ENCODE measurements at regions of chr9 and their contacts with region 1.

Region 1: GRCh38 chr9:127869310-127870152 is 7.9 kb downstream of the AK1 start:
- DNase-seq: no peak
- H3K4me3 ChIP-seq: no peak overlapping the region
- CTCF ChIP-seq: peak; percentile 96

Region 2: DNA sequence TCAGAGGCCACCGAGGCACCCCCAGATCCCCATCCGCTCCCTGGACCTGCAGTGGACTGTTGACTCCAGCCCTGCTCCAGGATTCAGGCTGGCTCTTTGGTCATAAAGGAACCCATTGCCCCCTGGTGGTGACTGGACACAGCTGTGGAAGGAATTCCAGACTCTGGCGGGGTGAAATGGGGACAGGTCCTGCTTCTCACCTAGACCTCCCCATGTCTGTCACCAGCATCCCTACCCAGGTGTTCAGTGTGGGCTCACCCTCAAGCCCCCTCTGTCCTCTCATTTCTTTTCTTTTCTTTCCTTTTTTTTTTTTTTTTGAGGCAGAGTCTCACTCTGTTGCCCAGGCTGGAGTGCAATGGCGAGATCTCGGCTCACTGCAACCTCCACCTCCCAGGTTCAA is 283.0 kb before region 1 on chr9:
- CTCF ChIA-PET with region 1: interaction called, 32 read pairs
- POLR2A ChIA-PET with region 1: no interaction called
- DNase-seq: no peak
- H3K4me3 ChIP-seq: no peak overlapping the region
- CTCF ChIP-seq: peak; percentile 92

Region 3: GRCh38 chr9:127785023-127785932 is 84.3 kb before region 1 on chr9:
- CTCF ChIA-PET with region 1: interaction called, 76 read pairs
- POLR2A ChIA-PET with region 1: no interaction called
- DNase-seq: no peak
- H3K4me3 ChIP-seq: peak overlapping the region; percentile 88
- CTCF ChIP-seq: peak; percentile 87

Region 4: GRCh38 chr9:127838375-127839078 is 31.0 kb before region 1 on chr9:
- CTCF ChIA-PET with region 1: interaction called, 10 read pairs
- POLR2A ChIA-PET with region 1: interaction called, 3 read pairs
- DNase-seq: peak; percentile 40
- H3K4me3 ChIP-seq: peak overlapping the region; percentile 21
- CTCF ChIP-seq: no peak

Region 5: DNA sequence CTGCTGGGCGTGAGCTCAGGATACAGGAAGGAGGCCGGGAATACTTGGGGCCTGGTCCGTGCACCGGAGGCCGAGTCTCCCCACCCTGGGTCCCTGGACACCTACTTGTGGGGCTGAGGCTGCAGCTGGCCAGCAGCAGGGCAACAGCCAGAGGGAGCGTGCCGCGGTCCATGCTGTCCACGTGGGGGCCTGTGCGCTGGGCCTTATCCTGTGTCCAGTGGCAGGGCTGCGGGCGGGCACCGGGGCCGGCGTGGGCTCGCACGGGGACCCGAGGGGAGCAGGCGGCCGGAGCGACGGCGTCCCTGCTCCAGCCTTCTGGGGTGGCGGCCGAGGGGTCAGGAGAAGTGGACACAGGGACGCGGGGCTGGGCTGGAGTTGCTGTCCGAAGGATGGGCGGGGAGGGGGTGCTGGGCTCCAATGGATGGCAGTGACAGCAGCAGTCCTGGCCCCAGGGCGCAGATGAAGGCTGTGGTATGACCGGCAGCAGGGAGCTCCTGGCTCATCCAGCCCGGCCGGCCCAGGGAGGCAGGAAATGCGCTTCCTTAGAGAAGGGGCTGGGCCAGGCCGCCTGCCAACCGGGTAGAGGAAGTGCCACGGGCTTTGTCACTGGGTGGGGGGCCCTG is 15.2 kb before region 1 on chr9 and contains the start of gene ENG:
- CTCF ChIA-PET with region 1: interaction called, 128 read pairs
- POLR2A ChIA-PET with region 1: interaction called, 3 read pairs
- DNase-seq: no peak
- H3K4me3 ChIP-seq: peak within 1 kb of the TSS; percentile 68
- CTCF ChIP-seq: peak; percentile 48

Region 6: GRCh38 chr9:127890053-127890452 is 20.5 kb after region 1 on chr9:
- CTCF ChIA-PET with region 1: interaction called, 16 read pairs
- POLR2A ChIA-PET with region 1: no interaction called
- DNase-seq: no peak
- H3K4me3 ChIP-seq: no peak overlapping the region
- CTCF ChIP-seq: no peak

Region 7: DNA sequence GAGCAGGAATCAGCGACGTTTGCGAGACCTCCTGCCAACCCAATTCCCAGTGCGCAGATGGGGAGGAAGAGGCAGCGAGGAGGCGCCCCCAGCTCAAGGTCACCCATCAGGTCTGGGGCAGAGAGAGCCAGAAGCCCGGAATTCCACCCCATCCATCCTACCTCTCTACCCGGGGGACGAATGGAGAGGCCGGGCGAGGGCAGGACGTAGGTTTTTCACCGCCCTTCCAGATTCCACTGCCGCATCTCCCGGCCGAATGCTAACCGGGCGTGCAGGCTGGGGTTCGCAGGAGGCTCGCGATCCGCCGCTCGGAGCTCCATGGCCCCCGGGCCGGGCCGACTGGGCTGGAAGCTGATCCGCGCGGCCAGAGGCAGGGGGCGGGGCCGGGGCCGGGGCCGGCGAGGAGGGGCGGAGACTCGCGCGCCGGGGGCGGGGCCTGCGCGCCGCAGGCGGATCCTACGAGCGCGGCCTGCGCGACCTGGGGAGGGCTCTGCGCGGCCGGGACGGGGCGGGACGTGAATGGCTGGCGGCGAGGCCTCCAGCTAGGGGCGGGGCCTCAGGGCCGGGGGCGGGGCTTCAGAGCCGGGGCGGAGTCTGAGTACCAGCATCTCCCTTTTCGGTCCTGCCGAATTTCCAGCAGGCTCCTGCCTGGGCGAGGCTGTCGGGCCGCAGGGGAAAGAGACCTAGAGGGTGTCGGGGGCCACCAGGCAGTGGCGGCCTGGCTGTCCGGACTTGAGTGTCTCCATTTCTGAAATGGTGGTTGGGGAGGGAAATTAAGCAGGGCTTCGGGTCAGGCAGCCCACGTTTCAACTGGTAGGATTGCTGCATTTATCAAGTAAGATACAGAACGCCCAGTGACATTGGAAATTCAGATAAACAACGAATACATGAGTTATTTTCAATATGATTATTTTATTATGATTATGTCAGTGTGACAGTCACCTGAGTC is 47.4 kb after region 1 on chr9 and contains the start of gene ST6GALNAC4:
- CTCF ChIA-PET with region 1: interaction called, 65 read pairs
- POLR2A ChIA-PET with region 1: no interaction called
- DNase-seq: no peak
- H3K4me3 ChIP-seq: peak within 1 kb of the TSS; percentile 74
- CTCF ChIP-seq: no peak

Measured in AG04449 (cell line).